Activated B cell treated with CpG ODN at 0.5 μM for 24 hours (primary cell): ENCODE measurements at regions of chr9 and their contacts with region 1.

Region 1: DNA sequence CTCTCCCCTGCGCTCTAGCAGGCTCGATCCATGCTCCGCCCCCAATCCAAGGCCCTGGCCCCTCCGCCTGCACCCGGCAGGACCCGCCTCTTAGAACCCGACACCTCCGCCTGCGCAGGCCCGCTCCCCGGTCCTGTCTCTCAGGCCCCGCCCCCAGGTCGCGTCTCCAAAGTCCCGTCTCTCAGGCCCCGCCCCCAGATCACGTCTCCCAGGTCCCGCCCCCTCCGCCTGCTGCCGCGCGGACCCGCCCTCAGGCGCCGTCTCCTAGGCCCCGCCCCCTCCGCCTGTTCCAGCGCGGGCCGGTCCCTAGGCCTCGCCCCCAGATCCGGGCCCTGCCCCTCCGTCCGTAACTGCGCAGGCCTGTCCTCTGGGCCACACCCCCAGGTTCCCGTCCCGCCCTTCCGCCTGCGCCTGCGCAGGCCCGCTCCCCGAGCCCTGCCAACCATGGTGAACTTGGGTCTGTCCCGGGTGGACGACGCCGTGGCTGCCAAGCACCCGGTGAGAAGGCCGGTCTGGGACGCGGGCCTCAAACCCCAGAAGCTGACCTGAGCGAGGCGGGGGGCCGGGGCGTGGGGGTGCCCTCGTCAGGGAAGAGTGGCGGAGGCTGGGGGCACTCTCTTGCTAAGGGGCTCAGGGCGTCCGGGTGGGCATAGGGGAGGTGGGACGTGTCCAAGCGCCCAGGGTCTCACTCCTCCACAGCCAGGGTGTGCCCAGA is at the start of gene TMEM141:
- DNase-seq: peak; percentile 99
- ATAC-seq: peak; percentile 87
- H3K4me3 Mint-ChIP-seq: peak within 1 kb of the TSS; percentile 86
- H3K27ac Mint-ChIP-seq: peak within 1 kb of the TSS; percentile 90
- H3K4me1 Mint-ChIP-seq: peaks cover 21% of the 10 kb centered on the region
- H3K27me3 Mint-ChIP-seq: no peaks in the 10 kb centered on the region
- CTCF ChIP-seq: no peak
- total RNA-seq, gene TMEM141: 34.9 and 35.8 TPM in 2 replicates

Region 2: GRCh38 chr9:136198605-136199083 is 592.4 kb before region 1 on chr9:
- CTCF ChIA-PET with region 1: no interaction called
- POLR2A ChIA-PET with region 1: no interaction called
- intact Hi-C with region 1: no loop called
- DNase-seq: no peak
- ATAC-seq: no peak
- H3K4me3 Mint-ChIP-seq: no peak overlapping the region
- H3K27ac Mint-ChIP-seq: no peak overlapping the region
- H3K4me1 Mint-ChIP-seq: peaks cover 20% of the 10 kb centered on the region
- H3K27me3 Mint-ChIP-seq: peaks cover 32% of the 10 kb centered on the region
- CTCF ChIP-seq: no peak

Region 3: DNA sequence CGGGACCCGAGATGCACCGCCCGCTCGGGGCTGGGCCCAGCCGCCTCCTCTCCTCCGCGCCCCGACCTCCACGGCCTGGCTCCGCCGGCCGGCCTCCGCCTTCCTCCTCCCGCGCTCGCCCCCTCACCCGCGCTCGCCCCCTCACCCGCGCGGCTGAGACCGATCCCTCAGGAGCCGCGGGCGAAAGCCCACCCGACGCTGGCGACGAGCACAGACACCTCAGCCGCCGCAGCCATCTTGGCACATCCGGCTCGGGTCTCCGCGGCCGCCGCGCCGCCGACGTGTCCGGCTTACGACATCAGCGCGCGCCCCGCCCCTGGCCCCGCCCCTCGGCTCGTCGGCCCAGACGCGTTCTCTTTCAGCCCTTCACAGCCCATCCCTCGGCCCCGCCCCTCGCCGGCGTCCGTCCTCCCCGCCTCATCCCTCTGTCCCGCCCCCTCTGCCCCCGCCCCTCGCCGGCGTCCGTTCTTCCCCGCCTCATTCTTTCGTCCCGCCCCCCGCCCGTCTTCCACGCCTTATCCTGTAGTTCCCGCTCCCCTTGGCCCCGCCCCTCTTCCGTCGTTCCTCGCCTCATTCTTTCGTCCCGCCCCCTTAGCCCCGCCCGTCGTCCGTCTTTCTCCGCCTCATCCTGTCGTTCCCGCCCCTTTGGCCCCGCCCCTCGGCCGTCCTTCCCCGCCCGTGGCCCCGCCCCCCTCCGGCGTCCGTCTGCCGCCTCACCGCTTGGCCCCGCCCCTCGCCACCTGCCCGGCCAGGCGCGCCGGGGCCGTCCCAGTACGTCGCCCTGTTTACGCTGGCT is 308.1 kb before region 1 on chr9 and contains the start of gene SEC16A:
- CTCF ChIA-PET with region 1: no interaction called
- POLR2A ChIA-PET with region 1: no interaction called
- intact Hi-C with region 1: loop called (anchors 1 kb)
- DNase-seq: peak; percentile 99
- ATAC-seq: peak; percentile 78
- H3K4me3 Mint-ChIP-seq: peak within 1 kb of the TSS; percentile 98
- H3K27ac Mint-ChIP-seq: peak within 1 kb of the TSS; percentile 97
- H3K4me1 Mint-ChIP-seq: peaks cover 34% of the 10 kb centered on the region
- H3K27me3 Mint-ChIP-seq: no peaks in the 10 kb centered on the region
- CTCF ChIP-seq: no peak
- total RNA-seq, gene SEC16A: 74.0 and 78.8 TPM in 2 replicates

Region 4: DNA sequence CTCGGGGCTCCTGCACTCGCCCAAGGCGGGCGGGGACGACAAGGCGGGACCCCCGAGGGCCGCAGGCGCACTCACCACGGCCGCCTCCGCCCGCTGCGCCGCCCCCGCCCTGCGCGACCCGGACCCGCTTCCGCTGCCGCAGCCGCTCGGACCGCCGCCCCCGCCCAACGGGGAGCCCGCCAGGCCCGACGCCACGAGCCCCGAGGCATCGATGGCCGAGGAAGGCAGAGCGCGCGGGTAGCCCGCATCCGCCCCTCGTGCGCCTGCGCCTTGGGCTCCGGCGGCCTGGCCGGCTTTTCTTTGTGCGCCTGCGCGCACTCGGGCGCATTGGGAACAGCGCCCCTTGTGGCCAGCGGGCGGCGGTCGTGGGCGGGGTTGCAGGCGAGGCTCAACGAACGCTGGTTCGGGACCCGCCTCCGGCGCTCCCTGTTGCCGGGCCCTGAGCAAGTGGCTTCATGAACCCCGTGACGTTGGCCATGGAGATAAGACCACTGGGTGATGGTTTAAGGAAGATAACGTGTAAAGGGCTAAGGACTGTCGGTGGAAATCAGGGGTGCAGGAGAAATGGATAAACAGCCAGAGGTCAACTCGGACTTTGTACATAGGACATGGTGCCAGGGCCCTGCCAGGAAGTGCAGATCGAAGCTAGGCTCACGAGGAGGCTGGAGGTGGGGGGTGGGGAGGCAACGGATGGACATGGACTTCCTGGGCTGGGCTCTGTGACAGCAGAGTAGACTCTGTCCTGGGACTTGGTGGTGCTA is 153.6 kb after region 1 on chr9 and contains the starts of genes C8G and FBXW5:
- CTCF ChIA-PET with region 1: no interaction called
- POLR2A ChIA-PET with region 1: interaction called, 3 read pairs
- intact Hi-C with region 1: loop called (anchors 1 kb)
- DNase-seq: peak; percentile 97
- ATAC-seq: peak; percentile 90
- H3K4me3 Mint-ChIP-seq: peak within 1 kb of the TSS; percentile 80
- H3K27ac Mint-ChIP-seq: peak within 1 kb of the TSS; percentile 79
- H3K4me1 Mint-ChIP-seq: peaks cover 9% of the 10 kb centered on the region
- H3K27me3 Mint-ChIP-seq: no peaks in the 10 kb centered on the region
- CTCF ChIP-seq: peak; percentile 48
- total RNA-seq, gene C8G: 0.69 and 3.4 TPM in 2 replicates
- total RNA-seq, gene FBXW5: 81.5 and 82.1 TPM in 2 replicates

Region 5: DNA sequence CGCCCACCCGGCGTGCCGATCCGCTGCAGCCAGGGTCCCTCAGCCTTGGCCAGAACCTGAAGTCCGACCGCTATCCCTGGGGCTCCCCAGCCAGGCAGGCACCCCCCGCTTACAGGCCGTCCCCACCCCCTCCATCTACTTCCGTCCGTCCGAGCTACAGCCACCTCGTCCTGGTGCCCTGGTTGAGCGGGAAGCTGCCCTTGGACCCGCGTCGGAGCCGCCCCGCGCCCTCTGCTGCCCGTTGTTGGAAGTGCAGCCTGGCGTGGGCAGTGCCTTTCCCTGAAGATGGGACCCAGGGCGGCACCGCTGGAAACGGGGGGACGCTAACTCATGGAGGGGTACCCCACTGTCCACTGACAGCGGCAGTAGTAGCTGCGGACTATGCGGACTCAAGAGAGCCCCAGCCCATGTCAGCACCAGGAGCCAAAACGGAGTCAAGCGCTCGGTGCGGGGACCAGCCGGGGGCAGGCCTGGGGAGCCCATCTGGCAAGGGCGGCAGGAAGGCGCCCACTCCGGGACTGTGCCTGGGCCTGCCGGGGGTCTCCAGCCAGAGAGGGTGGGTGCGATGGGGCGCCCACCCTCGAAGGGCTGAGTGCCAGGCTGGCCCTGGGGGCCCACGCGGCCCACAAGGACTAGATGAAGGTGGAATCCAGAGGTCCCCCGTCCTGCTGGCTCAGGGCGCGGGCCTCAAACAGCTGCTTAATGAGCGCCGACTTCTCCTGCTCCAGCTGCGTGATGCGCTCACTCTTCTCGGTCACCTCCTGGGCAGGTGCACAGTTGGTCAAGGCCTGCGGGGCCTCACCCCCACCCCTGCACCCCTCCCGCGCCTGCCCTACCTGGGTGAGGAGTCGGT is 273.2 kb after region 1 on chr9:
- CTCF ChIA-PET with region 1: interaction called, 11 read pairs
- POLR2A ChIA-PET with region 1: no interaction called
- intact Hi-C with region 1: loop called (anchors 1 kb)
- DNase-seq: peak; percentile 65
- ATAC-seq: peak; percentile 26
- H3K4me3 Mint-ChIP-seq: no peak overlapping the region
- H3K27ac Mint-ChIP-seq: no peak overlapping the region
- H3K4me1 Mint-ChIP-seq: peaks cover 8% of the 10 kb centered on the region
- H3K27me3 Mint-ChIP-seq: peaks cover 6% of the 10 kb centered on the region
- CTCF ChIP-seq: peak; percentile 87

Region 6: GRCh38 chr9:137150617-137151457 is 359.8 kb after region 1 on chr9:
- CTCF ChIA-PET with region 1: no interaction called
- POLR2A ChIA-PET with region 1: no interaction called
- intact Hi-C with region 1: loop called (anchors 1 kb)
- DNase-seq: peak; percentile 67
- ATAC-seq: peak; percentile 67
- H3K4me3 Mint-ChIP-seq: peak overlapping the region; percentile 52
- H3K27ac Mint-ChIP-seq: peak overlapping the region; percentile 92
- H3K4me1 Mint-ChIP-seq: peaks cover 14% of the 10 kb centered on the region
- H3K27me3 Mint-ChIP-seq: peaks cover 9% of the 10 kb centered on the region
- CTCF ChIP-seq: no peak

Region 7: DNA sequence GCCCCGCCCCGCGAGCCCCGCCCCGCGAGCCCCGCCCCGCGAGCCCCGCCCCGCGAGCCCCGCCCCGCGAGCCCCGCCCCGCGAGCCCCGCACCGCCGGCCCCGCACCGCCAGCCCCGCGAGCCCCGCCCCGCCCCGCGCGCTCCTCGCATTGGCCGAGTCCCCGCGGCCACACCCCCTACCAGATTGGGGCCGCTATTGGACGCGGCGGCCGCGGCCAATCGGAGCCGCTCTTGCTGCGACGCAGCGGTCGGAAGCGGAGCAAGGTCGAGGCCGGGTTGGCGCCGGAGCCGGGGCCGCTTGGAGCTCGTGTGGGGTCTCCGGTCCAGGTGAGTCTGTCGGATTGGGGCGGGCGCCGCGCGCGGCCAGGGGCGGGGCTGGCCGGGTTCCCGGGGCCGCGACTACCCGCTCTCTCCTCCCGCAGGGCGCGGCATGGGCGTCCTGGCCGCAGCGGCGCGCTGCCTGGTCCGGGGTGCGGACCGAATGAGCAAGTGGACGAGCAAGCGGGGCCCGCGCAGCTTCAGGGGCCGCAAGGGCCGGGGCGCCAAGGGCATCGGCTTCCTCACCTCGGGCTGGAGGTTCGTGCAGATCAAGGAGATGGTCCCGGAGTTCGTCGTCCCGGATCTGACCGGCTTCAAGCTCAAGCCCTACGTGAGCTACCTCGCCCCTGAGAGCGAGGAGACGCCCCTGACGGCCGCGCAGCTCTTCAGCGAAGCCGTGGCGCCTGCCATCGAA is 760.7 kb after region 1 on chr9 and contains the start of gene MRPL41:
- CTCF ChIA-PET with region 1: no interaction called
- POLR2A ChIA-PET with region 1: no interaction called
- intact Hi-C with region 1: loop called (anchors 10 kb)
- DNase-seq: peak; percentile 83
- ATAC-seq: peak; percentile 85
- H3K4me3 Mint-ChIP-seq: peak within 1 kb of the TSS; percentile 83
- H3K27ac Mint-ChIP-seq: peak within 1 kb of the TSS; percentile 79
- H3K4me1 Mint-ChIP-seq: peaks cover 37% of the 10 kb centered on the region
- H3K27me3 Mint-ChIP-seq: no peaks in the 10 kb centered on the region
- CTCF ChIP-seq: no peak
- total RNA-seq, gene MRPL41: 26.0 and 32.9 TPM in 2 replicates